Aorta (tissue), 5 donors: ENCODE measurements at regions of chr18 and their contacts with region 1.

Region 1: GRCh38 chr18:24488824-24489493 is 28.5 kb downstream of the HRH4 start:
- DNase-seq: no peak
- ATAC-seq: peak; percentile 74
- H3K4me3 ChIP-seq: no peak overlapping the region
- H3K27ac ChIP-seq: no peak overlapping the region
- H3K4me1 ChIP-seq: no peaks in the 10 kb centered on the region
- H3K27me3 ChIP-seq: no peaks in the 10 kb centered on the region

Region 2: GRCh38 chr18:24176727-24177416 is 312.1 kb before region 1 on chr18:
- intact Hi-C with region 1: loop called in 1 of 2 experiments (anchors 10 kb)
- DNase-seq: peak; percentile 66 to 81
- ATAC-seq: peak; percentile 56
- H3K4me3 ChIP-seq: no peak overlapping the region
- H3K27ac ChIP-seq: no peak overlapping the region
- H3K4me1 ChIP-seq: peaks cover 0 to 1% of the 10 kb centered on the region in 2 donors
- H3K27me3 ChIP-seq: no peaks in the 10 kb centered on the region

Region 3: DNA sequence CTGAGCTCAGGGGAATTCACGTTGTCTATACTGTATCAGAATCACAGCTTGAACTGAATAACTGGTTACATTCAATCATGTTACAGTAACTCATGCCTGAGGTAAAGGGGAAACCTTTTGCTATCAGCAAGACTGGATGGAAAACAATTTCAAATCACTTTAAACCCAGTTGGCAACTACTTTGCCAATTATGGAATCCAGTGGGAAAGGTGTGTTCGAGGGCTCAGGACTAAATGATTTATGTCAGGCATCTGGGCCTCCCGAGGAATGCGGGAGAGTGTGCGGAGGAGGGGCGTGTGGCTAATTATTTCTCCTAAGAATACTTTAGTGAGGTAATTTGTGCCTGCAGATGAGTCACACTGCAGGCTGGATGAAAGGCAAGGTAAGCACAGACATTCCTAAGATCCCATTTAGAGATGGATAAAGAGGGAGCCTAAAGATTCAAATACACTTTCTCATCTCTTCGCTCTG is 71.6 kb after region 1 on chr18:
- intact Hi-C with region 1: no loop called
- DNase-seq: no peak
- ATAC-seq: no peak
- H3K4me3 ChIP-seq: no peak overlapping the region
- H3K27ac ChIP-seq: no peak overlapping the region
- H3K4me1 ChIP-seq: no peaks in the 10 kb centered on the region
- H3K27me3 ChIP-seq: no peaks in the 10 kb centered on the region

Region 4: GRCh38 chr18:24659827-24660720 is 171.1 kb after region 1 on chr18:
- intact Hi-C with region 1: no loop called
- DNase-seq: peak in 1 of 2 donors; percentile 45
- ATAC-seq: peak; percentile 27
- H3K4me3 ChIP-seq: no peak overlapping the region
- H3K27ac ChIP-seq: no peak overlapping the region
- H3K4me1 ChIP-seq: no peaks in the 10 kb centered on the region
- H3K27me3 ChIP-seq: no peaks in the 10 kb centered on the region